ENCODE measurements at regions of chr12 and their contacts with region 1.

Region 1: DNA sequence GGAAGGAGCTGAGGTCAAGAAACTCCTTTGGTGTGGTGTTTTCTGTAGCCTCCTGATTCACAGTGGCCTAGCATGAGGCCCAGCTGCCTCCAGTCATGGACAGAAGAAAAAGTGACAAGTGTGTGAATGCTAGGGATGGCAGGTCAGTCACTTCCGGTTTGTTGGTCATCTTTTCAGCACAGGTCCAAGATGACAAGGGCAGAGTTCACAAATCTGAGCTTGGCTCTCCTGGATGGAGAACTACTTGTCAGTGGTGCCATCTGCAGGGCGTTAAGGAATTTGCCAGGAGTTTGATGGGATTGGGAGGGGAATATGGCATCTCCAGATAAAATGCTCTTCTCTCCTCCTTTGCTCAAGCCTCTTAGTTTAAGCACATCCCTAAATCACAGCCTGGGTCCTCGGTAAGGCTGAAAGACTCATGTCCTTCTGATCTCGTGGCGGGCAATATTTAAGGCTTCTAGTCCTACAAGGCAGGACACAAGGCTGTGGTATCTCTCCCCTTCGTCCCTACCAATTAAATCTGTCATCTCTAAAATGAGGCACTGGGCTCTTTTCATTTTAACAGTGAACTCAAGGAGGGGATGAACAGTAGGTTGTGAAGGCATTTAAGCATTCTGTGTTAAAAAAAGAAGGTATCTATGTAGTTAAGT is 10.0 kb downstream of the TUBA1B start:
- DNase-seq: peak; percentile 58
- H3K4me3 ChIP-seq: no peak overlapping the region
- H3K27ac ChIP-seq: no peak overlapping the region
- H3K4me1 ChIP-seq: no peaks in the 10 kb centered on the region
- H3K27me3 ChIP-seq: no peaks in the 10 kb centered on the region
- CTCF ChIP-seq: peak; percentile 45 to 71 (median 57)
- EP300 ChIP-seq: no peak
- POLR2A ChIP-seq: no peak

Region 2: DNA sequence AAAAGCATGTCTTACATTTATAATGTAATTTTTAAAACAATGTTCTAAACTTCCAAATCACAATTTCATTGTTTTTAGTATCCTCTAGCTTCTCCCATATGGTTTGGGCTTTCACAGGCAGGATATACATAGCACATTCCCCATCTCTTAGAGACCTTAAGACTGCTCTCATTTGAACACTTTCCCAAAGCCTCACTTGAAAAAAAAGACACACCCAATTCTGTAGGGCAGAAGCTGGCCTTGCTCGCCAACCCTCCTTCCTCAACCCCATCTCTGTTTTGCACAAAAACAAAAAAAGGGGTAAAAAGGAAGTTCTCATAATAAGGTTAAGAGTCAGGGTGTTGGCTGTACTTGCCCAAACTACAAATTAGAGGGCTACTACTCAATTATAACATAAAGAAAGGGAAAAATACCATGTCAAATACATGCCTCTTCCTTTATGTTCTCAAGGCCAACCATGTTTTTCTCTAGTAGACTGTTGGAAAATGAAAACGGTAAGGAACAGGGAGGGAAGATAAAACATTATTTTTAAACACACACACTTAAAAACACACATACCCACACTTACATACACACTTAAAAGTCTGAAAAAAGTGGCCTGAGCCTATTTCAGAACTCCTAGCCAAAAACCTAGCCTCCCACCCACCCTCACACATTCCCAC is 429.2 kb before region 1 on chr12:
- in situ Hi-C with region 1: no loop called
- intact Hi-C with region 1: no loop called
- DNase-seq: no peak
- H3K4me3 ChIP-seq: no peak overlapping the region
- H3K27ac ChIP-seq: no peak overlapping the region
- H3K4me1 ChIP-seq: peaks cover 0 to 3% (median 0%) of the 10 kb centered on the region in 4 donors
- H3K27me3 ChIP-seq: no peaks in the 10 kb centered on the region
- CTCF ChIP-seq: no peak
- EP300 ChIP-seq: no peak
- POLR2A ChIP-seq: no peak

Region 3: DNA sequence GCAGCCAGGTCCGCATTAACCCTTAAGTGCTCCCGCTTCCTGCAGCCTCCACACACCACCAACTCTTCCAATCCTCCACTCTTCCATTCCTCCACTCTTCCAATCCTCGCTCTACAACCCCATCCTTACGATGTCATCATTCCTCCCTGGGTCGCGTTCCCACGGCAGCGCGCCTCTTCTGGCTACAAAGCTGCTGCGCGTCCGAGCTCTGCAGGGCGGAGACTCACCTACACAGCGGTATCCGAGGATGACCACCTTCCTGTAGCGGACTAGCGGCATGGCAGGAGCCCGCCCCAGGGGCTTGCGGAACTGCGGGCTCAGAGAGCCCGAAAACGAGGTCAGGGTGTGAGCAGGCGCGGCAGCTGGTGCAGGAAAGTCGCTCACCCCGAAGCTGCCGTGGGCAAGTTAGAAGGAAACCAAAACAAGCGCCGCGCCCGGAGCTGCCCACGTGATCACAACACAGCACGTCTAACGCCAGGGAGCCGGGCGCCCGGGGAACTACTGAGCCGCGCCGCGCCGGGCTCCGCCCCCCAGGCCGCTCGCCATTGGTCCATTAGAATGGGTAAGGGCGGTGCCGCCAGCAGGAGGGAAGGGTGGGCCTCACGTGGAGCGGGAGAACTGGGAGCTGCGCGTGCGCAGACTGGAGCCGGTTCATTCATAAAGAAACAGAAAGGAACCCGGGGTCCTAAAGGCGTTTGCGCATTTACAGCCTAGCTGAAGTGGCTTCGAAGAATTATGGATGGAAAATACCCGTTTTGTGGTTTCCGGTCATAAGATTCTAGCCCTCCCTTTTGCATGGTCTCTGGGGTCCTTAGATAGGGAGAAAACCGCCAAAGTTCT is 51.4 kb before region 1 on chr12 and contains the start of gene RHEBL1:
- in situ Hi-C with region 1: loop called in 2 of 4 experiments (anchors 5 to 10 kb)
- intact Hi-C with region 1: loop called (anchors 10 kb)
- DNase-seq: peak; percentile 99
- H3K4me3 ChIP-seq: peak within 1 kb of the TSS; percentile 63 to 84 (median 66)
- H3K27ac ChIP-seq: peak within 1 kb of the TSS; percentile 77 to 88 (median 84)
- H3K4me1 ChIP-seq: peaks cover 4 to 13% (median 12%) of the 10 kb centered on the region in 4 donors
- H3K27me3 ChIP-seq: no peaks in the 10 kb centered on the region
- CTCF ChIP-seq: peak in 1 of 5 experiments; percentile 15
- EP300 ChIP-seq: no peak
- POLR2A ChIP-seq: peak; percentile 40
- total RNA-seq, gene RHEBL1: not detected

Region 4: DNA sequence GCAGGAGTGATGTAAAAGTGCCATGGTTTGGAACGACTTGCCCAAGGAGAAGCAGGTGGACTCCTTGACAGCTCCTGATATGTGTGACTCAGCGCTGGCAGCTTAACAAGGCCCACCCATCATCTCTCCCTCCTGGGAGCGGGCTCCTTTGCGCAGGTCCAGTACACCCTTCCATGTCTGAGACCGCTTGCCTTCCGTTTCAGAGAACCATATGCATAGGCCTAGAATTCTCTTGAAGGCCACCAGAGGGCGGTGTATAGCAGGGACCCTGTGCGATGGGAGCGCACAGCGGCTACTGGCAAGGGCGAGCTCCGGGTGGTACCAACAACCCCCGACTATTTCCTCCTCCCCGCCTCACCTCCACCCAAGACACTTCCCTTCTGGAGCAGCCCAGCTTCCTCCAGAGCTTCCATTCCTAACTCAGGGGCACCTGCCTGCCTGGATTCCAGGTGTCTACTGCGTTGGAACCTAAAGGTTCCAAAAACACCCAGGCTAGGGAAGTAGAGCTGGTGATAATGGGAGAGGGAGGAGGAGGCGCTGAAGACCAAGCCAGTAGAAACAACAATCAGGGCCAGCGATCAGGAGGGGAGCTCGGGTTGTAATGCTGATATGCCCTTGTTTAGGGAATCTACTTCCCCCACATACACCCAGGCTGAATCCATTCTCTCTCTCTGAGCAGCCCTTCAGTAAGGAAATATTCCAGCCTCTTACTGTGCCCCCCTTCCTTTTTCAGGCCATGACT is 32.8 kb before region 1 on chr12:
- in situ Hi-C with region 1: no loop called
- intact Hi-C with region 1: loop called (anchors 5 kb)
- DNase-seq: peak; percentile 73
- H3K4me3 ChIP-seq: no peak overlapping the region
- H3K27ac ChIP-seq: no peak overlapping the region
- H3K4me1 ChIP-seq: peaks cover 21 to 42% (median 29%) of the 10 kb centered on the region in 4 donors
- H3K27me3 ChIP-seq: peaks cover 51% of the 10 kb centered on the region
- CTCF ChIP-seq: peak; percentile 77 to 90 (median 87)
- EP300 ChIP-seq: no peak
- POLR2A ChIP-seq: no peak

Region 5: GRCh38 chr12:49647827-49648711 is 526.9 kb after region 1 on chr12:
- in situ Hi-C with region 1: no loop called
- intact Hi-C with region 1: no loop called
- DNase-seq: no peak
- H3K4me3 ChIP-seq: no peak overlapping the region
- H3K27ac ChIP-seq: peak overlapping the region in 2 of 4 donors; percentile 9 to 34
- H3K4me1 ChIP-seq: peaks cover 0 to 7% (median 0%) of the 10 kb centered on the region in 4 donors
- H3K27me3 ChIP-seq: no peaks in the 10 kb centered on the region
- CTCF ChIP-seq: no peak
- EP300 ChIP-seq: no peak
- POLR2A ChIP-seq: no peak

Measured in transverse colon (tissue), 4 donors.